Thyroid gland (tissue), 4 donors: ENCODE measurements at regions of chr11 and their contacts with region 1.

Region 1: DNA sequence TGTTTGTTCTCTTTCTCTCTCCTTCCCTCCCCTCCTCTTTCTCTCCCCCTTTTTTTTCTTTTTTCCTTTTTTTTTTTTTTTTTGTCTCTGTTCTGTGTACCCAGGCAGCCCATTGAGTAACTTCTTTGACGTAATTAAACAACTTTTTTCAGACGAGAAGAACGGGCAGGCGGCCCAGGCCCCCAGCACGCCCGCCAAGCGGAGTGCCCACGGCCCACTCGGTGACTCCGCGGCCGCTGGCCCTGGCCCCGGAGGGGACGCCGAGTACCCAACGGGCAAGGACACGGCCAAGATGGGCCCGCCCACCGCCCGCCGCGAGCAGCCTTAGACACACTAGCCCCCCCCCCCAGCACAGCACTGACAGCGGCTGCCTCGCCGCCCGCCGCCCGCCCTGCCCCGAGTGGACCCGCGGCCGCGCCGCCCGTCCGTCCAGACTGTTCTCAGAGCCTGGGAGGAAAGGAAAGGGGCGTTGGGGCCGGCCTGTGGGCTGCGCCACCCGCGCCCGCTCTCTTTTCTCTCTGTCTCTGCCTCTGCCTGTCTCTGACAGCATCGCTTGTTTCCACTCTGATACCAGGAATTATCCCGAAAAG is 26.1 kb downstream of the MOB2 start:
- DNase-seq: peak; percentile 83 to 92
- H3K4me3 ChIP-seq: no peak overlapping the region
- H3K27ac ChIP-seq: peak overlapping the region; percentile 61 to 75 (median 67)
- H3K4me1 ChIP-seq: peaks cover 21 to 42% of the 10 kb centered on the region in 2 donors
- H3K27me3 ChIP-seq: no peaks in the 10 kb centered on the region
- CTCF ChIP-seq: no peak
- POLR2A ChIP-seq: no peak

Region 2: DNA sequence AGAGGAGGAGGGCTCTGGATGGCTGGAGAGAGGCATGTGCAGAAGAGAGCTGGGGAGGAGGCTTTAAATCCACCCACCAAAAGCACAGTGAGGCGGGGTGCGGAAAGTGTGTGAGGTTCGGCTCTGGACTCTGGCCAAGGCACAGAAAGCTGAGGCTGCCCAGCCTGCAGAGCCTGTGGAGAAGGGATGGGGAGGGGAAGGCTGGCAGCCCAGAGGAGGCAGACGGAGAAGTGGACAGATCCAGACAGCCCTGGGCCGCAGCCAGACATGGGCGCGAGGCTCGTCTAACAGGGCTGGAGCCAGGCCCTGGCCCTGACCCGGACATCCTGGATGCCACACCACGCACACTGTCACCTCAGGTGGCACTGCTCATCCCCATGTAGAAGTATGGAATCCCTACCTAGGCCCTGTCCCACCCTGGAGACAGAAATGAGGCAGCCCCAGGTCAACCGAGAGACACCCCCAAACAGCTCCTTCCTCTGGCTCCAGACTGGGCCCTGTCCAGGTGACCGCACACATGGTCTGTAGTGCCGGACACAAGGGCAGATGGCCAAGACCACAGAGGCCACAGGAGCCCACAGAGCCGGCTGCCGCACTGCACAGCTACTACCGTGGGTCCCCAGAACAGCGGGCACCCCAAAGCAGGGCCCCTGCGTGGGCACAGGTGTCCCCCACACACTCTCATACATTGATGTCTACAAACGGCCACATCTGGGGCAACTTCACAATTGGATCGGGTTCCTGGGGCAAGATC is 42.6 kb after region 1 on chr11:
- intact Hi-C with region 1: loop called (anchors 5 kb)
- DNase-seq: peak; percentile 86 to 87
- H3K4me3 ChIP-seq: no peak overlapping the region
- H3K27ac ChIP-seq: peak overlapping the region; percentile 11 to 42 (median 19)
- H3K4me1 ChIP-seq: peaks cover 42 to 60% of the 10 kb centered on the region in 2 donors
- H3K27me3 ChIP-seq: no peaks in the 10 kb centered on the region
- CTCF ChIP-seq: no peak
- POLR2A ChIP-seq: no peak

Region 3: GRCh38 chr11:1546077-1546535 is 85.6 kb after region 1 on chr11:
- intact Hi-C with region 1: no loop called
- DNase-seq: no peak
- H3K4me3 ChIP-seq: no peak overlapping the region
- H3K27ac ChIP-seq: peak overlapping the region in 1 of 3 donors; percentile 42
- H3K4me1 ChIP-seq: peaks cover 12 to 32% of the 10 kb centered on the region in 2 donors
- H3K27me3 ChIP-seq: no peaks in the 10 kb centered on the region
- CTCF ChIP-seq: no peak
- POLR2A ChIP-seq: no peak

Region 4: GRCh38 chr11:1652771-1653540 is 192.5 kb after region 1 on chr11:
- intact Hi-C with region 1: no loop called
- DNase-seq: peak; percentile 66 to 76
- H3K4me3 ChIP-seq: no peak overlapping the region
- H3K27ac ChIP-seq: no peak overlapping the region
- H3K4me1 ChIP-seq: no peaks in the 10 kb centered on the region
- H3K27me3 ChIP-seq: no peaks in the 10 kb centered on the region
- CTCF ChIP-seq: peak; percentile 75 to 99 (median 92)
- POLR2A ChIP-seq: no peak